ENCODE measurements at regions of chr2 and their contacts with region 1.

Region 1: DNA sequence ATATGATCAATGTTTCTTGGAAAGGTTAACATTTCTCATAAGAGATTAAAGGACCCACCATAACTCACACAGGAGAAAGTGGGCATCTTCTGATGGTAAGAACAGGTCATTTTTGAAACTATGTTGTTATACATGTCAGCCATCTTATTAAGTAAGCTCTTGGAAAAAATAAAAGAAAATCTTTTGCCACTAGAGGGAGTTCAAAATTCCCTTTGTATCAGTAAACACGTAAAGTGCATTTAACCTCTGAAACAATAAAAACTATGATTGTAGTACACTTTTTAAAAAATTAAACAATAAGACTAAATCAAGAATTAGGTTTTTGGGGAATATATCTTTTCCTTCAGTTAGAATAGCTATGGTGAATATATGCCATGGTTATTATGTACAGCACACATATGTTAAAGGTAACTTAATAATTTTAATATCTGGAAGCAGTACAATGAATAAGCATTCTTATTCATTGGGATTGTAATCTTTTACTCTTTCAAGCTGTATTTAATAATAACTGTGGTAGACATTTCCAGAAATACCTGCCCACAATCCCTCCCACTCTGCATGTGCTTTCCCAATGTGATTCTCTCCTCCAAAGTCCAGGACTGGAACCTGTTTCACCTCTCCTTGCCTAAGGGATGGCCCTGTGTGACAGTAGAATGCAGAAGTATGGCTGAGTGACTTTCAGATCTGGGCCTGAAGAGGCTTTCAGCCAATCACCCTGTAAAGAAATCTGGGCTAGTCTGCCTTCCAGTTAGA is 64.2 kb downstream of the RBMS1 start:
- DNase-seq: no peak
- H3K4me3 Mint-ChIP-seq: peak overlapping the region; percentile 47
- H3K27ac Mint-ChIP-seq: peak overlapping the region; percentile 88
- H3K4me1 Mint-ChIP-seq: peaks cover 49% of the 10 kb centered on the region
- H3K27me3 Mint-ChIP-seq: no peaks in the 10 kb centered on the region

Region 2: DNA sequence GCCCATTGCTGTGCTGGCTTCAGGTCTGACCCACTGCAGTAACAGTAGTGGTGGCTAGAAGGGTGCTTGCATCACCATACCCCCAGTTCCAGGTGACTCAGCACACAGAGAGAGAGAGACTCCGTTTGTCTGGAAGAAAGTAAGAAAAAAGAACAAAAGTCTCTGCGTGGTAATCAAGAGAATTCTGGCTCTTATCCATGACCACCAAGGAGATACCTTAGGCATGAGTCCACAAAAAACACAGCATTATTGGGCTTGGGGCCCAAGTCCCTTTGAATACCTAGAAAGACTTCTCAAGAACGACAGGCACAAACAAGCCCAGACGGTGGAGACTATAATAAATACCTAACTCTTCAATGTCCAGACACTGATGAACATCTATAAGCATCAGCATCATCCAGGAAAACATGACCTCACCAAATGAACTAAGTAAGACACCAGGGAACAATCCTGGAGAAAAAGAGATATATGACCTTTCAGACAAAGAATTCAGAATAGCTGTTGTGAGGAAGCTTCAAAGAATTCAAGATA is 791.4 kb before region 1 on chr2:
- CTCF ChIA-PET with region 1: no interaction called
- intact Hi-C with region 1: no loop called
- DNase-seq: no peak
- H3K4me3 Mint-ChIP-seq: no peak overlapping the region
- H3K27ac Mint-ChIP-seq: no peak overlapping the region
- H3K4me1 Mint-ChIP-seq: no peaks in the 10 kb centered on the region
- H3K27me3 Mint-ChIP-seq: no peaks in the 10 kb centered on the region

Region 3: DNA sequence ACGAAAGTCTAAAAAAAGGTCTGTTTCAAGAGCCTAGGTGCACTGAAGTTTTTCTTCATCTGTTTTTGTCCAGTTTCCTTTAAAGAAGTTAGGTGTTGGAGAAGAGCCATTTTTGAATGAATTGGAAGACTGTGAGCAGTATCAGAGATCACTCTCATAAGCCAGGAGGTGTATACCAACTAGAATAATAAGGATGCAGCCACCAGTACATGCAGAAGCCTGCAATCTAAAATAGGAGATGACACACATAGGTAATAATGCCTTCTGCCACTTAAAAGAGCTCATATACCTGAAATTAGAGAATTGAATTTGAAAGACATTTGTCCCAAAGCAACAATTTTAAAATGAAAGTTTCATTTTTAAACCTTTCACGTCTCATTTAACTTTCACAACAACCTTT is 17.5 kb before region 1 on chr2:
- CTCF ChIA-PET with region 1: interaction called, 15 read pairs
- intact Hi-C with region 1: loop called (anchors 1 kb)
- DNase-seq: no peak
- H3K4me3 Mint-ChIP-seq: peak overlapping the region; percentile 43
- H3K27ac Mint-ChIP-seq: peak overlapping the region; percentile 60
- H3K4me1 Mint-ChIP-seq: peaks cover 63% of the 10 kb centered on the region
- H3K27me3 Mint-ChIP-seq: no peaks in the 10 kb centered on the region

Region 4: GRCh38 chr2:160442603-160443002 is 13.2 kb after region 1 on chr2:
- CTCF ChIA-PET with region 1: no interaction called
- intact Hi-C with region 1: no loop called
- DNase-seq: no peak
- H3K4me3 Mint-ChIP-seq: no peak overlapping the region
- H3K27ac Mint-ChIP-seq: no peak overlapping the region
- H3K4me1 Mint-ChIP-seq: peaks cover 11% of the 10 kb centered on the region
- H3K27me3 Mint-ChIP-seq: no peaks in the 10 kb centered on the region

Region 5: GRCh38 chr2:160472839-160473251 is 43.4 kb after region 1 on chr2:
- CTCF ChIA-PET with region 1: interaction called, 4 read pairs
- intact Hi-C with region 1: loop called (anchors 1 kb)
- DNase-seq: no peak
- H3K4me3 Mint-ChIP-seq: no peak overlapping the region
- H3K27ac Mint-ChIP-seq: no peak overlapping the region
- H3K4me1 Mint-ChIP-seq: peaks cover 69% of the 10 kb centered on the region
- H3K27me3 Mint-ChIP-seq: no peaks in the 10 kb centered on the region

Region 6: GRCh38 chr2:160652236-160652635 is 222.8 kb after region 1 on chr2:
- CTCF ChIA-PET with region 1: interaction called, 3 read pairs
- intact Hi-C with region 1: loop called (anchors 5 kb)
- DNase-seq: peak; percentile 87
- H3K4me3 Mint-ChIP-seq: no peak overlapping the region
- H3K27ac Mint-ChIP-seq: peak overlapping the region; percentile 17
- H3K4me1 Mint-ChIP-seq: peaks cover 30% of the 10 kb centered on the region
- H3K27me3 Mint-ChIP-seq: no peaks in the 10 kb centered on the region

Region 7: DNA sequence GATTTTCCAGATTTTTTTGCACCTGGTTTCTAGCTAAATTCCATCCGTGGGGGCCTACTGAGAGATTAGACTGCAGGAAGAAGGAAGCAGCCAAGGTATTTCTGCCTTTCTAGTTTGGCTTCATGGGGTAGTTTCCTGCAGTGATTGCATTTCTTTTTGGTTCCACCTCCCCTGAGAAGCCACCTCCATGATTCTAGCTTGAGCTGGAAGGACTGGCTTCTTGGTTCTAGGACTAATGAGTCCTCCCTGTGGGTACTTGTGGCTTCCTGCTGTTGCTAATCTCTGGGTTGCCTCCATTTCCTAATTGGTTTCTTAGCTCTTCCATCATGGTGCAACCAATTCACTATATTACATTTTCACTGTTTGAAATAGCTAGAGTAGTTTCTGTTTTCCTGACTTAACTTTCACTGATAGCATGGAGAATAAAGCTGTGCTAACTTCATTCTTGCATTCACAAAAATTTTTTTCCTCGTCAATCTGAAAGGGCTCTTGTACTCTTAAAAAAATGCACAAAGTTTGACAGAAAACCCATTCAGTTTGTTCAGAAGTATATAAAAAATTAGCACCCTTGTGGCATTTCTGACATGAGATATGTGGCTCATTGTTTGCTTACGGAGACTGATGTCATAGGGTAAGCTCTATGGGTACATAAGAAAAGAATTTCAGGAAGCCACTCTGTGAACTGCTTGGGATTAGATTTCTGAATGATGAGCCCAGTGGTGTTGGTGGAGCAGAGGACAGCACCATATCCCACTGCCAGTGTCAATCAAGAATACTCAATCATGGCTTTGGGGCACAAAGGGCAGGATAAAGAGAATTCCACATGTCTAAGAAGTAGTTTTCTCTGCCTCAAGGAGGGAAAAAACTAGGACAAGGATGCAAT is 307.0 kb after region 1 on chr2:
- CTCF ChIA-PET with region 1: no interaction called
- intact Hi-C with region 1: no loop called
- DNase-seq: no peak
- H3K4me3 Mint-ChIP-seq: no peak overlapping the region
- H3K27ac Mint-ChIP-seq: no peak overlapping the region
- H3K4me1 Mint-ChIP-seq: no peaks in the 10 kb centered on the region
- H3K27me3 Mint-ChIP-seq: no peaks in the 10 kb centered on the region

Region 8: GRCh38 chr2:160794926-160795325 is 365.5 kb after region 1 on chr2:
- CTCF ChIA-PET with region 1: no interaction called
- intact Hi-C with region 1: no loop called
- DNase-seq: no peak
- H3K4me3 Mint-ChIP-seq: no peak overlapping the region
- H3K27ac Mint-ChIP-seq: no peak overlapping the region
- H3K4me1 Mint-ChIP-seq: no peaks in the 10 kb centered on the region
- H3K27me3 Mint-ChIP-seq: no peaks in the 10 kb centered on the region

Region 9: DNA sequence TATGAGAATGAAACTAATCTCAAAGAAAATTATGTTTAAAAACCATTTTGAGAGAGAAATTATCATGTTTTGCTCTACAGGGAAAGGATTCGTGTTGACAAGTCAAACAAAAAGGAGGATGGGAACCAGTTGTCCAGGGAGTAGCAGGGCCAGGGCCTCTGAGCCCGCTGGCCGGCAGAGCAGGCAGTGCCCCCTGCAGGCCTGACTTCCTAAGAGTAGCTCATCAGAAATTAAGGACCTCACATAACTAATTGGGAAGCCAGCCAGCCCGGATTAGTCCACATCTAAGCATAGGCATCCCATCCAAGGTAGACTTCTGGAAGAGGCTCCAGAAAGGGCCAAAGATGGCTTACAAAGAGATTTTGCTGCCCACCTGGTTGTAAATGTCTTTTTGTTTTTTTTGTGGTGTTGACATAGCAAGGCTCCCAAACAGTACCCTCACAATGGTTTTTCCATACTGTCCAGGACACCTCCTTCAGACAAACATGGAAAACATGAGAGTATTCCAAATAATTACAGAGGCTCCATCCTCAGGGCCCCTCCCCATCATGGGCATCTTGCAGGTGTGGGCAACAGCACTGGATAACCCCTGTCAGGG is 489.6 kb after region 1 on chr2:
- CTCF ChIA-PET with region 1: no interaction called
- intact Hi-C with region 1: loop called (anchors 2 kb)
- DNase-seq: peak; percentile 58
- H3K4me3 Mint-ChIP-seq: no peak overlapping the region
- H3K27ac Mint-ChIP-seq: no peak overlapping the region
- H3K4me1 Mint-ChIP-seq: no peaks in the 10 kb centered on the region
- H3K27me3 Mint-ChIP-seq: no peaks in the 10 kb centered on the region

Region 10: DNA sequence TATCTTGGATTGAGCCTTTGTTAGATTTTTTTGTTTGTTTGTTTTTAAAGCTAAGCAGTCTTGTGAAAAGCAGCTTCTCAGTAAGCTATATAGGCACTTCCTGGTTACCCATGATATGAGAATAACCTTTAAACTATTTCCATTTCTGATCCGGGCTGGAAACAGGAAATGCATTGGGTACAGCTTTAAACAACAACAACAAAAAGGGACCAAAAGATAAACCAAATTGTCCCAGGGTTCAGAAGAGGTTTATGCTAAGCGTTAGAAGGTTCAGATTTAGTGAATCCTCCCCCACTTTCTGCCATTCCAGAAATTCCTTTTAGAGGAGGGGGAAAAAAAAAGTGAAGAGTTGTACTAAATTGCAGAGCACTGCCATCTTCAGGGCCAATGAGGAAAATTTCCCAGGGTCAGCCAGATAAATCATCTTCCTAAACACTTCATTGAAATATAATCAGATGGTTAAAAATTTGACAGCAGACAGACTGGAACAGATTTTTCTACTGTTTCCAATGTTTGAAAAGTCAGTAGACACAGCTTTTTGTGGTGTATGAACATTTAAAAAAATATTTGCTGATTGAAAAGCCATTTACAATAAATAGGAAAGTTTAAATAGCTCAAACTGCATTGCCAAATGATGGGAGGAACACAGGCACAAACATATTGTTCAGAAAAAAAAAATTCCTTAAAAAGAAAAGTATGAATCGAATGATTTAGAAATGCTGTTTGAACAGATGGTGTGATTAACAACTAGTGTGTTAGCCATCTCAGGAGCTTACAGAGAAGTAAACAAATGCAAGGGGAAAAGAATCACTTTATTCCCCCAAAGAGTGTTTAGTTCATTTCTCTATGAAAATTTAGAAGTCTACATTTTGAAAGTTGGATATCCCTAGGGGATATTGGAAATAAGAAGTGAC is 540.9 kb after region 1 on chr2:
- CTCF ChIA-PET with region 1: interaction called, 5 read pairs
- intact Hi-C with region 1: loop called (anchors 5 kb)
- DNase-seq: peak; percentile 29
- H3K4me3 Mint-ChIP-seq: no peak overlapping the region
- H3K27ac Mint-ChIP-seq: no peak overlapping the region
- H3K4me1 Mint-ChIP-seq: peaks cover 8% of the 10 kb centered on the region
- H3K27me3 Mint-ChIP-seq: no peaks in the 10 kb centered on the region